Cardiac septum (tissue), 1 donor: ENCODE measurements at regions of chr3 and their contacts with region 1.

Region 1: GRCh38 chr3:100400780-100401673 is at the starts of genes LNP1 and TOMM70:
- DNase-seq: peak; percentile 97
- total RNA-seq, gene LNP1: 4.6 TPM
- total RNA-seq, gene TOMM70: 54.0 TPM

Region 2: GRCh38 chr3:99833617-99834205 is 567.3 kb before region 1 on chr3:
- intact Hi-C with region 1: loop called (anchors 10 kb)
- DNase-seq: no peak

Region 3: DNA sequence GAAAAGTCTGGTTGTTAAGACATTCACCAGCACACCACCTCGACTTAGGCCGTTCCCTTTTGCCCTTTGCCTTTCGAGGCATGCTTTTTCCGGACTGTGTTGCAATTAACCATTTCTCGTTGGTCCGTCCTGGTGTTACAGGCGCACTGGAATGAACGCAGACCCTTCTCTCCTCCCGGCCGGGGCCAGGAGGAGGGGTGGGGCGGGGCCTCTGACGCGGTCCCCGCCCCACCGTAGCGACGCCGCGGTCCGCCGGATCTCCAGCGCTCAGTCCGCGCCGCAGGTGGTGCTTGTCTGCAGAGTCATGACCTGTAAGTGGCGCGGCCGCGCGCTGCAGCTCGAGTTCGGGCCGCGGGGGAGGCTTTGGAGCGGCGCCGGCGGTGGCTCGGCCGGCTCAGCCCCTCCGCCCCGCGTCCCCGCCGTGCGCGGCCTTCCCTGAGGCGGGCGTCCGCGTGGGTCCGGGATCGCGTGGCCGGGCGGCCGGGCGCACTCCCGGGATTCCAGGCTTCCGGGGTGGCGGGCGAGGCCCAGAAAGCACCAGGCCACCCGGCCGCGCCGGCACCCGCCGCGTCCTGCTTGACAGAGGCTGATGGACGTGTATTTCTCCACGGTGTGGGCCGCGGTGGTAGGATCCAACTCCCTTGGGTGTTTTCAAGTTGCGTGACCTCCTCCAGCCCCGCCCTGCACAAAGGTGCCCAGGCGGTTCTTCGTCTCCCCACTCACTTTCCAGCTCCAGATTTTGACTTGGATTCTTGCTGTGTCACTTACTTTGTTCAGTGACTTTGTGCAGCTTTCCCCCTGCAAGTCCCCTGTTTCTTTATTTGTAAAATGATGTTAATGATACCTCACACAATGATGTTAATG is 66.3 kb before region 1 on chr3 and contains the start of gene NIT2:
- intact Hi-C with region 1: loop called (anchors 1 kb)
- DNase-seq: peak; percentile 95
- total RNA-seq, gene NIT2: 41.0 TPM

Region 4: GRCh38 chr3:100492059-100493006 is 91.3 kb after region 1 on chr3 and contains the start of gene TMEM45A:
- intact Hi-C with region 1: loop called (anchors 1 kb)
- DNase-seq: peak; percentile 96
- total RNA-seq, gene TMEM45A: 4.8 TPM

Region 5: DNA sequence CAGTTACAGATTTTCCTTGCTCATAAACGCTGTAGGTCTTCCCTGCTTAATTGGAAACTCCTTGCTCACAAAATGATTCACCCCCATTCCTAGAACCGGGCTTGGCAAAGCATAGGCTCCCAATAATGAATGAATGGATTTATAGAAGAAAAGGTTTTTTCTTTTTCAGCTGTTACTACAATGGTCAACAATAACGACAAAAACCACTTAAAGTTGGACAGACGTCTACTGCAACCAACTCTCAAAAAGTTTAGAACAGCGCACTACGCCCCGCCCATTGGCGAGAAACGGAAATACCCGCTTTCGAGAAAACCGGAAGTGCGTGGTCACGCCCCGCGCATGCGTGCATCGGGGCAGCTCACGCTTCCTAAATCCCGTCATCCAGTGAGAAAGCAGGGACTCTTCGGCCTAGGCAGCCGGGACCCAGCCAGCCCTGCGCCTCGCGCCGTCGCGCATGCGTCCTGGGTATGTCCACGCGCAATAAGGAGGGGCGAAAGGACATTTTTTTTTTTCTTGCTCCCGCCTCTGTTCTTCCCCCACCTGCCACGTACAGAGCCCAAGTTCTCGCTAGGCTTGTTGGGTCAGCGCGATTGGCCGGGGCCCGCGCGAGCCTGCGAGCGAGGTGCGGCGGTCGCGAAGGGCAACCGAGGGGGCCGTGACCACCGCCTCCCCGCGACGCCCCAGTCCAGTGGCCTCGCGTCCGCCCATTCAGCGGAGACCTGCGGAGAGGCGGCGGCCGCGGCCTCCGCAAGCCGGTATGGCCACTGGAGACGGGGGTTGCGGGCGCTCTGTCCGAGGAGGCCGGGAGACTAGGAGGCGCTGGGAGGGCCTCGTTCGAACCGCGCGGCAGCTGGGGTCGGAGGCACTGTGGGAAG is 308.2 kb after region 1 on chr3 and contains the start of gene TFG:
- intact Hi-C with region 1: loop called (anchors 2 kb)
- DNase-seq: peak; percentile 99
- total RNA-seq, gene TFG: 93.0 TPM